Stomach (tissue), 19 donors: ENCODE measurements at regions of chr22 and their contacts with region 1.

Region 1: GRCh38 chr22:44828193-44828592 is 75.8 kb downstream of the ARHGAP8 start:
- DNase-seq: no peak
- H3K4me3 ChIP-seq: no peak overlapping the region
- H3K27ac ChIP-seq: no peak overlapping the region
- H3K4me1 ChIP-seq: no peaks in the 10 kb centered on the region
- H3K27me3 ChIP-seq: no peaks in the 10 kb centered on the region
- CTCF ChIP-seq: no peak
- EP300 ChIP-seq: no peak
- POLR2A ChIP-seq: no peak

Region 2: GRCh38 chr22:44765571-44766285 is 62.5 kb before region 1 on chr22:
- intact Hi-C with region 1: no loop called
- DNase-seq: peak in 1 of 2 donors; percentile 63
- H3K4me3 ChIP-seq: no peak overlapping the region
- H3K27ac ChIP-seq: no peak overlapping the region
- H3K4me1 ChIP-seq: peaks cover 0 to 14% (median 7%) of the 10 kb centered on the region in 4 donors
- H3K27me3 ChIP-seq: peaks cover 0 to 18% (median 0%) of the 10 kb centered on the region in 3 donors
- CTCF ChIP-seq: no peak
- EP300 ChIP-seq: no peak
- POLR2A ChIP-seq: no peak

Region 3: DNA sequence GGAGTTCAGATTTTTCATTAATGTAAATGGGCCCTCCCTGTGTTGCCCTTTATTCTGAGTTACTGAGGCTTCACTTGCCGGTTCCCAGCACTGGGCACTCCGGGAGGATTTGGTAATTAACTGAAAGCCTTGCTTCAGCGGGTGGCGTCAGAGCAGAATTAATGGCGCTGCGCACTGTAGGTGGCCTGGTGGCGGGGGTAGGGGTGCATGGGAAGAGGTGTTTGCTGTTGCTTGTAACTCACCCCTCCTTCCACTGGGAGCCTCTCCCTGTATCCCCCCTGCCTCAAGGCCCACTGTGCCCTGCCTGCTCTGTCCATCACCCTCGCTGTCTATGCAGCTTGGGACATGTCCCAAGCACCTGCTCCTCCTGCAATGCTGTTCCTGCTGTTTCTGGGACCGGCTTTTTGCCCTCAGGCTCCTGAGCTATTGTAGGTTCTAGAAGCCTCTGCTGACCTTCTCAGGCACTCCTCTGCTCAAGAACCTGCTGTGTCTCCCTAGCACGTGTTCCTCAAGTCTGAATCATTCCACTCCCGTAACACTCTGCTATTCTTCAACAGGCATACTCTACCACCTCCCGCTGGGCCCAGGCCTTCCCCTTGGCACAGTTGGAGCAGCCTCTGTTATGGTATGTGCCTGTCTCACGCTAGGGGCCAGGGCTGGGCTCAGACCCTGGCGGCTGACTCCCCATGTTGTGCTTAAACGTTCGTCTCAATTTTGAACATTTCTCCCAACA is 51.4 kb before region 1 on chr22:
- intact Hi-C with region 1: no loop called
- DNase-seq: no peak
- H3K4me3 ChIP-seq: no peak overlapping the region
- H3K27ac ChIP-seq: no peak overlapping the region
- H3K4me1 ChIP-seq: no peaks in the 10 kb centered on the region
- H3K27me3 ChIP-seq: no peaks in the 10 kb centered on the region
- CTCF ChIP-seq: no peak
- EP300 ChIP-seq: no peak
- POLR2A ChIP-seq: no peak

Region 4: GRCh38 chr22:44975427-44976262 is 147.5 kb after region 1 on chr22:
- intact Hi-C with region 1: no loop called
- DNase-seq: peak; percentile 76 to 95
- H3K4me3 ChIP-seq: no peak overlapping the region
- H3K27ac ChIP-seq: no peak overlapping the region
- H3K4me1 ChIP-seq: no peaks in the 10 kb centered on the region
- H3K27me3 ChIP-seq: peaks cover 0 to 32% (median 3%) of the 10 kb centered on the region in 3 donors
- CTCF ChIP-seq: peak in 5 of 7 experiments; percentile 24 to 61 (median 49)
- EP300 ChIP-seq: no peak
- POLR2A ChIP-seq: no peak

Region 5: DNA sequence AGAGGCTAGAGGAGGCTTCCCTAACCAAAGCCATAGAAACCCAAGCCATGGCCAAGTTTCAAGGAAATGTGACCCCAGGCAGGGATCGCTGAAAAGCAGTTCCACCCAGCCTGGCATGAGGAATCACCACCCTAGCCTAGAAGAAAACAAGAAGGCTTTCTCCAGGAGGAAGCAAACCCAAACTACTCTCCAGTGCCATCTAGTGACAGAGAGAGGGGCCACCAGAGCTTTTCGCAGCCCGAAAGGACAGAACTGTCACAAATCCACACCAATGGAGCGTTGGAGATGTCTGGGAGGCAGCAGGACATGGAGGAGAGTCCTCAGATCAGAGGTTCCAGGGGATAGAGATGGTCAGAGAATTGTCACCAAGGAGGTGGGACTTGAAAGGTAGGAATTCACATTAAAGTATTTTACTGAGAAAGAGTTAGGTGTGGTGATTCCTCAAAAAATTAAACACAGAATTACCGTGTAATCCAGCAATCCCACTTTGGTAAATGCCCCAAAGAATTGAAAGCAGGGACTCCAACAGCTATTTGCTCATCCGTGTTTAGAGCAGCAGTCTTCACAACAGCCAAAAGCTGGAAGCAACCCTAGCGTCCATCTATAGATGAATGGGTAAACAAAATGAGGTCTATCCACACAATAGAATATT is 268.2 kb after region 1 on chr22:
- intact Hi-C with region 1: loop called (anchors 10 kb)
- DNase-seq: peak; percentile 58 to 85
- H3K4me3 ChIP-seq: no peak overlapping the region
- H3K27ac ChIP-seq: no peak overlapping the region
- H3K4me1 ChIP-seq: peaks cover 0 to 2% (median under 1%) of the 10 kb centered on the region in 4 donors
- H3K27me3 ChIP-seq: peaks cover 0 to 77% (median 3%) of the 10 kb centered on the region in 3 donors
- CTCF ChIP-seq: peak in 5 of 7 experiments; percentile 42 to 71 (median 60)
- EP300 ChIP-seq: no peak
- POLR2A ChIP-seq: no peak